ENCODE measurements at regions of chr11 and their contacts with region 1.

Region 1: GRCh38 chr11:111446404-111447111 is 65.6 kb downstream of the BTG4 start:
- DNase-seq: peak; percentile 80
- ATAC-seq: peak; percentile 100
- H3K4me3 Mint-ChIP-seq: no peak overlapping the region
- H3K27ac Mint-ChIP-seq: peak overlapping the region; percentile 9
- H3K4me1 Mint-ChIP-seq: peaks cover 15% of the 10 kb centered on the region
- H3K27me3 Mint-ChIP-seq: no peaks in the 10 kb centered on the region
- CTCF ChIP-seq: peak; percentile 67

Region 2: DNA sequence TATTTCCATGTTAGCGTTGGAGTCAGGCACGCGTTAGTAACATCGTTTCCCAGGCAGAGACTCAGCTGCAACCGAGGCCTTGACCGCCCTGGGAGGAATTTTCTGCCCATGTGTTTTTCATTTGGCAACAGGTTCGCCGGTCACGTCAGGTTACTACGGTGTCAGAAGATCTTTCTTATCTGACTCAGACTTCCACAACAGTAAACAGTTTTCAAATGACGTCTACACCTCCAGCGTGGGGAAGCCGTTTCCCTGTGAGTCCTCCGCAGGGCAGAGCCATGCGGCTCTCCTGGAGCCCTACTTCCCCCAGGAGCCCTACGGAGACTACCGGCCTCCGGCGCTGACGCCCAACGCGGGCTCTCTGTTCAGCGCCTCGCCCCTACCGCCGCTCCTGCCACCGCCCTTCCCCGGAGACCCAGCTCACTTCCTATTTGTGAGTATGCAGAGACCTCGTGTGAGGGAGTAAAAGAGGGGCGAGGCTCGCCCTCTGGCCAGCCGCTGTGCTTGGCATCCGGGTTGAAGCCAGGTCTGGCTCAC is 162.5 kb before region 1 on chr11:
- CTCF ChIA-PET with region 1: interaction called, 56 read pairs
- POLR2A ChIA-PET with region 1: no interaction called
- intact Hi-C with region 1: loop called (anchors 2 kb)
- DNase-seq: no peak
- ATAC-seq: no peak
- H3K4me3 Mint-ChIP-seq: no peak overlapping the region
- H3K27ac Mint-ChIP-seq: no peak overlapping the region
- H3K4me1 Mint-ChIP-seq: no peaks in the 10 kb centered on the region
- H3K27me3 Mint-ChIP-seq: no peaks in the 10 kb centered on the region
- CTCF ChIP-seq: no peak

Region 3: DNA sequence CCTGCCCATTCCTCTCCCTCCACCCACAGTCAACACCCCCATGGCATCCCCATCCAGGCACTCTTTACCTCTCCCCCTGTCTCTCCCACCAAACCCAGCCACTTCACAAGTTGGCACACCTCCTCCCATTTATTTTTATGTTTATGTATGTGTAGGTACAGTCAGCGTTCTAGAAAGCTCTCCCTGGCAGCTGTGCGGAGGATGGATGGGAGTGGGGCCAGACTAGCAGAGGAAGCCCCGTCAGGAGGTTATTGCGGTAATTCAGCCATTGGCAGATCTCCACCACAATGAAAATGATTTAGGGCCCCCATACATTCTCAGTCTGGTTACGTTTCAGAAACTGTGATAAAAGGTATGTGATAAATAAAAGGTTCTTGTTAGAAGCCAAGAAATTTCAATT is 14.3 kb after region 1 on chr11:
- CTCF ChIA-PET with region 1: interaction called, 18 read pairs
- POLR2A ChIA-PET with region 1: interaction called, 3 read pairs
- intact Hi-C with region 1: no loop called
- DNase-seq: peak; percentile 14
- ATAC-seq: no peak
- H3K4me3 Mint-ChIP-seq: no peak overlapping the region
- H3K27ac Mint-ChIP-seq: no peak overlapping the region
- H3K4me1 Mint-ChIP-seq: peaks cover 3% of the 10 kb centered on the region
- H3K27me3 Mint-ChIP-seq: peaks cover 11% of the 10 kb centered on the region
- CTCF ChIP-seq: no peak